MCF 10A (cell line): ENCODE measurements at regions of chr1 and their contacts with region 1.

Region 1: DNA sequence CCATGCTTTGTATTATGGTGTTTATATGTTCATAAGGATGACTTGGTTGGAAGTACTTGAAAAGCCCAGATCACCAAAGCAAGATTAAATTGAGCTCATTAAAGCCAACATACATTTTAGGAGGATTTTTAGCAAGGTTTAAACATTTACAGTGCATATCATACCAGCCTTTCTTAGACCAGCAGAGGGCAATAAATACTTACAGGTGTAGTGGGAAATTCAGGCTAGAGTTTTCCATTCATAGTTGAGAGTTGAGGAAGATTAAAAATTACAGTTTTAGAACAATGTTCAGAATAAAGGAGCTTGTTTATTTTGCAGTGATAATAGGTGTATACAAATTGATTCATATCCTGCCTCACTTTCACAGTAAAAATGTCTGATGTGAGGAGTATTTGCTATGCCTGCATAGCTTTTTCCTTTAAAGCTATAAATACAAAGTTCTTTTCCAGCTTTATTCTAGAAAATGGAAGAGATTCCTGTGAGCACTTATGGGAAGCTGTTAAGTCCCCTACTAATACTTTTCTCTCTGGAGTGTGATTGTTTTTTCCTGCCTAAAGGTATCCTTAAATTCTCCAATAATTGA is 35.3 kb downstream of the DTL start:
- DNase-seq: peak; percentile 72
- H3K4me3 Mint-ChIP-seq: no peak overlapping the region
- H3K27ac Mint-ChIP-seq: peak overlapping the region; percentile 13
- H3K4me1 Mint-ChIP-seq: no peaks in the 10 kb centered on the region
- H3K27me3 Mint-ChIP-seq: no peaks in the 10 kb centered on the region
- CTCF ChIP-seq: peak; percentile 97

Region 2: DNA sequence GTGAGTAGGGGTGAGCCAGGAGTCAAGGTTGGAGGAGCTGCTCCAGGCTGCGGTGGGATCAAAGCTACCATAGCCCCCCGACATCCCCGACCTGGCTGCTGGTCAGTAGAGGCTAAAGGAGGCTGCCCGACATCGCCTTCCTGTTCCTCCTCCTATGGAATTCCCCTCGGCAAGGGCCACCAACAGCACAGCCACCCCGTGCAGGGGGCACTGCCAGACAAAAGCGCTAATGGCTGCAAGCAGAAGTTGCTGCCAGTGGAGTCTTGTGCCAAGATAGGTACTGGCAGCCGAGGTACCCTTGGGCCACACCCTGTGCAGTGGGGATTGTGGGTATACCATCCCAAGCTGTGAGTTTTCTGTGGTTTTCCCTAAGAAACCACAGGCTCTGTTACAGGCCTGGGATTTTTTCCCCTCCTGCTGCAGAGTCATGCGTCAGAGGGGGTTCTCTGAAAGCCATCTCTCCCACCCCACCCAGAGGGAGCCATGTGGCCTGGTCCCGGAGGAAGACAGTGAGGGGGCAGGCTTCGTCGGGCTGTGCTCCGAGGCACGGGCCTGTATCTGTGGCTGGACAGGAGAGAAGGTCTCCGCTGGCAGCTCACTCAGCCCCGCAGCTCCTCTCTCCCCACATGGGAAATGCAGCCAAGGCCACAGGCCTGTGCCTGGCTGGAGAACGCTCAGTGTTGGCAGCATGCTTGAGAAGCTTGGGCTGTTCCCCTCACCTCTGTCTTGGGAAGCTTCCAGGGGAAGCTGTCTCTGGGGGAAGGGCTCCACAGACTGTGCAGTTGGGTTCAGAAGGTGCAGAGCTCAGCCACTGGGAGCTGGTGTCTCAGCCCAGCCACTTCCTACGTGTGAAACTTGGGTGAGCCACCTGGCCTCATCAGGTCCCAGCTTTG is 437.9 kb before region 1 on chr1:
- CTCF ChIA-PET with region 1: no interaction called
- POLR2A ChIA-PET with region 1: no interaction called
- intact Hi-C with region 1: no loop called
- DNase-seq: peak; percentile 98
- H3K4me3 Mint-ChIP-seq: peak overlapping the region; percentile 45
- H3K27ac Mint-ChIP-seq: peak overlapping the region; percentile 84
- H3K4me1 Mint-ChIP-seq: peaks cover 45% of the 10 kb centered on the region
- H3K27me3 Mint-ChIP-seq: no peaks in the 10 kb centered on the region
- CTCF ChIP-seq: no peak

Region 3: DNA sequence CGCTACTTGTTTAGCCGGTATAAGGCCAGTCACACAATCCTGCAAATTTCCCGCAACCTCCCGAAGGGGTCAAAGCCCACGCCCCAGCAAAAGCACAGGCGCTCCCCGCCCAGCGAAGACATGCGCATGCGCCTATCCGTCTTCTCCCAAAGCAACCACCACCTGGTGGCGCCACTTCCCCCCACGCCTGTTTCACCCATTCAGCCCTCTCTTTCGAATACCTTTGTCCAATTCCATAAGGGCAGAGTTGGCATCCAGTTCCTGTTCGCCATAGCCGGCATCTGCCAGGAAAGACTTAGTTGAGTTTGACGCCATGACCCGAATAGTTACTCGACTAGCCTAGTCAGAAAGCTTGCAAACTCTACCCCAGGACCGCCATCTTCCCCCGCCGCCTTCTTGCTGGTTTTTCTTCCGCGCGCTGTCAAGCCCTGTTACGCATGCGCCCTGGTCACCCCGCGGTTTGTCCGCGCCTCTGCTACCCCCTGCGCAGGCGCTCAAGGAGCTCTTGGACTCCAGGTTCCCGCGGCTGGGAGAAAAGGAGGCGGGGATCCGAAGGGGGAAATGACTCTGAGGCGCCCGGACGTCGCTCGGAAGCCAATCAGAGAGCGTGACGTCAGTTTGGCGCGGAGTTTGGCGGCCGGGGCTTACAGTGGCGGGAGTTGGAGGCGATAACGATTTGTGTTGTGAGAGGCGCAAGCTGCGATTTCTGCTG is 35.5 kb before region 1 on chr1 and contains the starts of genes DTL and INTS7:
- CTCF ChIA-PET with region 1: interaction called, 43 read pairs
- POLR2A ChIA-PET with region 1: interaction called, 10 read pairs
- intact Hi-C with region 1: no loop called
- DNase-seq: peak; percentile 100
- H3K4me3 Mint-ChIP-seq: peak within 1 kb of the TSS; percentile 88
- H3K27ac Mint-ChIP-seq: peak within 1 kb of the TSS; percentile 89
- H3K4me1 Mint-ChIP-seq: peaks cover 65% of the 10 kb centered on the region
- H3K27me3 Mint-ChIP-seq: no peaks in the 10 kb centered on the region
- CTCF ChIP-seq: peak; percentile 99
- total RNA-seq, gene DTL: 20.2 and 34.4 TPM in 2 replicates
- total RNA-seq, gene INTS7: 50.0 and 62.3 TPM in 2 replicates

Region 4: GRCh38 chr1:212104586-212105325 is 33.9 kb after region 1 on chr1:
- CTCF ChIA-PET with region 1: interaction called, 37 read pairs
- POLR2A ChIA-PET with region 1: no interaction called
- intact Hi-C with region 1: no loop called
- DNase-seq: no peak
- H3K4me3 Mint-ChIP-seq: no peak overlapping the region
- H3K27ac Mint-ChIP-seq: no peak overlapping the region
- H3K4me1 Mint-ChIP-seq: no peaks in the 10 kb centered on the region
- H3K27me3 Mint-ChIP-seq: no peaks in the 10 kb centered on the region
- CTCF ChIP-seq: no peak

Region 5: DNA sequence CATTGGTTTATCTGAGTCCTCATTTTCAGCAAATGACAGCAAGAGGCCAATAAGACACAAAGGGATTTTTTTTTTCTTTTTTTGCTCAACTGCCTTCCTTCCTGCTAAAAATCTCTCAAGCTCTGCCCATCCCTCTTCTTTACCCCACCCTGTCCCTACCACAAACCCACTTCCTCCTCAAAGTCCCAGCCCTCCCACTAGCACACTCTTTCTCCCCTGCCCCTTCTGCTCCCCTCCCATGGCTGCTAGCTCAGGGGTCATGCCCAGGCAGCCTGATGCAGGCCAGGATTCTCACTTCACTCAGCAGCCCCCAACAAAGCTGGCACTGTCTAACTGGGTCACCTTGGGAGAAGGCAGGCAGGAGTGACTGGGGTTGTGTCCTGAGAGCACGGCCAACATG is 185.6 kb after region 1 on chr1:
- CTCF ChIA-PET with region 1: interaction called, 28 read pairs
- POLR2A ChIA-PET with region 1: no interaction called
- intact Hi-C with region 1: no loop called
- DNase-seq: no peak
- H3K4me3 Mint-ChIP-seq: no peak overlapping the region
- H3K27ac Mint-ChIP-seq: peak overlapping the region; percentile 20
- H3K4me1 Mint-ChIP-seq: peaks cover 34% of the 10 kb centered on the region
- H3K27me3 Mint-ChIP-seq: peaks cover 2% of the 10 kb centered on the region
- CTCF ChIP-seq: no peak

Region 6: DNA sequence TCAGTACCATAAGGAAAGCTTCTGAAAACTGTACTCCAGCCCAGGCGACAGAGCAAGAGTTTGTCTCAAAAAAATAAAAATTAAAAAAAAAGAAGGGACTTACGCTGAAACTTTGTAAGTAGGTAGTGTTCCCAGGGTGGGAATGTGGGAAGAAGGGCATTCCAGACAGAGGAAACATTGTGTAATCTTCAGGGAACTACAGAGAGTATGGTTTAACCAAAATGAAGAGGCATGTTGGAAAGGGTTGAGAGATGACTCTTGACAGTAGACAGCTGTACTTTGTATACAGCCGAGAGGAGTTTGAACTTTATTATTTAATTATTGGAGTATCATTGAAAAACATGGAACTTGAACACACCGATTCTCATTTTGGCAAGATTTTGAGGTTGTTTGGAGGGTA is 257.4 kb after region 1 on chr1:
- CTCF ChIA-PET with region 1: interaction called, 29 read pairs
- POLR2A ChIA-PET with region 1: no interaction called
- intact Hi-C with region 1: no loop called
- DNase-seq: no peak
- H3K4me3 Mint-ChIP-seq: no peak overlapping the region
- H3K27ac Mint-ChIP-seq: no peak overlapping the region
- H3K4me1 Mint-ChIP-seq: no peaks in the 10 kb centered on the region
- H3K27me3 Mint-ChIP-seq: no peaks in the 10 kb centered on the region
- CTCF ChIP-seq: no peak

Region 7: GRCh38 chr1:212432706-212433576 is 362.1 kb after region 1 on chr1 and contains the start of gene NENF:
- CTCF ChIA-PET with region 1: interaction called, 22 read pairs
- POLR2A ChIA-PET with region 1: interaction called, 5 read pairs
- intact Hi-C with region 1: no loop called
- DNase-seq: peak; percentile 96
- H3K4me3 Mint-ChIP-seq: peak within 1 kb of the TSS; percentile 78
- H3K27ac Mint-ChIP-seq: peak within 1 kb of the TSS; percentile 81
- H3K4me1 Mint-ChIP-seq: peaks cover 43% of the 10 kb centered on the region
- H3K27me3 Mint-ChIP-seq: no peaks in the 10 kb centered on the region
- CTCF ChIP-seq: no peak
- total RNA-seq, gene NENF: 110 and 122 TPM in 2 replicates